Naive thymus-derived CD8-positive, alpha-beta T cell (primary cell): ENCODE measurements at regions of chr19 and their contacts with region 1.

Region 1: DNA sequence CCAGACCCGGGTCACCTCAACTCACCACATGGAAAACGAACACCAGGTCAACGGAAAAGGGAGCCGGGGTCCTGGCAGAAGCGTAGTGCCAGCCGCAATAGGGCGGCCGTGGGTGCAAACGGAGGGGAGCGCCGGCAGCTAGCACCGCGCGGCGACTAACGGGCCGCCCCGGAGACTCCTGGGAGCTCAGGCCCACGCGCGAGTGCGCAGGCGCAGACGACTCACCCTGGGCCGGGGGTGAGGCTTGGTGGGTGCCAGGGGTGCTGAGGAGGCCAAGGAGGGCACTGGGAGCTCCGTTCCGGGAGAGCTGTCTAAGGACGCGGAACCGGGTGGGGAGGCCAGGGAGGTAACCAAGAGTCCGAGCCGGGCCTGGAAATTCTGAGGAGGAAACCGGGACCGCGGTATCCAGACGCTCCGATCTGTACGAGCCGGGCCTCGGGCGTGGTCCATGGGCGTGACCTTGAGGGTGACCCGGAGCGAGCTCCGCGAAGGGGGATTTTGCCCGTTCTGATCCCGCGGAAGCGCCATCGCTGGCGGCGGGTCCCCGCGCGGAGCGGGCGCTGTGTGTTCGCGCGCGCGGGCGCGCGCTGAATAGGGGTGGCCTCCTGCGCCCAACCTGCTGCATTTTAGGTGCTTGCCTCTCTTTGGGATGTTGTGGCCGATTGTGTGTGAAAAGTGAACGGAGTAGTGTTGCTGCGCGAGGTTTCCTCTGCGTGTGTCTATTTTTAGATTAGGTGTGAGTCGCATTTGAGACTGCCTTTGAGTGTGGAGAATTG is at the start of gene ZNF382:
- DNase-seq: peak; percentile 71 to 93 (median 83)
- ATAC-seq: peak; percentile 78 to 84
- H3K4me3 Mint-ChIP-seq: peak within 1 kb of the TSS; percentile 88 to 99 (median 96)
- H3K27ac Mint-ChIP-seq: peak within 1 kb of the TSS; percentile 86 to 98 (median 96)
- H3K4me1 Mint-ChIP-seq: peaks cover 16 to 31% (median 30%) of the 10 kb centered on the region in 4 donors
- H3K27me3 Mint-ChIP-seq: no peaks in the 10 kb centered on the region
- polyA plus RNA-seq, gene ZNF382: 3.3 to 7.9 (median 7.1) TPM

Region 2: GRCh38 chr19:36528194-36528920 is 76.9 kb before region 1 on chr19 and contains the start of gene ZNF260:
- POLR2A ChIA-PET with region 1: interaction called, 22 read pairs
- DNase-seq: peak; percentile 84 to 95 (median 90)
- ATAC-seq: peak; percentile 89
- H3K4me3 Mint-ChIP-seq: peak within 1 kb of the TSS; percentile 94 to 100 (median 98)
- H3K27ac Mint-ChIP-seq: peak within 1 kb of the TSS; percentile 93 to 99 (median 98)
- H3K4me1 Mint-ChIP-seq: peaks cover 19 to 32% (median 24%) of the 10 kb centered on the region in 4 donors
- H3K27me3 Mint-ChIP-seq: no peaks in the 10 kb centered on the region
- polyA plus RNA-seq, gene ZNF260: 5.5 to 9.8 (median 8.2) TPM